ENCODE measurements at regions of chr4 and their contacts with region 1.

Region 1: DNA sequence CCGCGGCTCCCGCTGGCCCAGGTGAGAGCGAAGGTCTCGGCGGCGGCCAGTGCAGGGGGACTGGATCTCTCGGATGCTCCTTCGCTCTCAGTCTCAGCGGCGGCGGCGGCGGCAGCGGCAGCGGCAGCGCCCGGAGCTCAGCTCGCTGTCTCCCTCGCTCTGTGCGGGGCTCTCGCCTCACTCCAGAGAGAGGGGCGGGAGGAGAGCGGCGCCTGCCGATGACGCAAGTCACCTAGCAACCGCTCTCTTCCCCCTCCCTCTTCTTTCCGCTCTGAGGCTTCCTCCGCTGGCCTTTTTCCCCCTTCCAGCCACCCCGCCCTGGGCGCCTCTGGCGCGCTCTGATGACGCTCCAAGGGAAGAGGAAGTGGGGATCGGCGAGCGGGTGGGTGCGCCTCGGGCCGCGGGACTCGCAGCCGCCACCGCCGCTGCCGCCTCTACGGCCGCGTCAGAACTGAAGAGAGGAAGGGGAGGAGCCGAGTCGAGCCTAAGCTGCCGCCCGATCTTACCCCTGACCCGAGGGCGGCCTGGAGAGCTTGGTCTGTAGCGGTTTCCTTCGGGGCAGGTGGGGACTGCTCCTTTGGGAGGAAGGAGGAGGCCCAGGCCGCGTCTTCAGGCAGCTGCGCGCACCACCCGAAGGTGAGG is at the start of gene FBXW7:
- DNase-seq: peak; percentile 91 to 99
- H3K4me3 ChIP-seq: peak within 1 kb of the TSS; percentile 94
- H3K27ac ChIP-seq: peak within 1 kb of the TSS; percentile 86
- H3K4me1 ChIP-seq: peaks cover 23% of the 10 kb centered on the region
- H3K27me3 ChIP-seq: no peaks in the 10 kb centered on the region
- CTCF ChIP-seq: no peak
- total RNA-seq, gene FBXW7: 28.0 and 30.2 TPM in 2 replicates

Region 2: GRCh38 chr4:152572417-152573086 is 36.5 kb after region 1 on chr4:
- CTCF ChIA-PET with region 1: no interaction called
- POLR2A ChIA-PET with region 1: no interaction called
- intact Hi-C with region 1: loop called (anchors 1 kb)
- DNase-seq: peak; percentile 18 to 92
- H3K4me3 ChIP-seq: peak overlapping the region; percentile 50; the same call in 1 of the 2 replicates
- H3K27ac ChIP-seq: peak overlapping the region; percentile 94
- H3K4me1 ChIP-seq: peaks cover 28% of the 10 kb centered on the region
- H3K27me3 ChIP-seq: no peaks in the 10 kb centered on the region
- CTCF ChIP-seq: no peak

Region 3: DNA sequence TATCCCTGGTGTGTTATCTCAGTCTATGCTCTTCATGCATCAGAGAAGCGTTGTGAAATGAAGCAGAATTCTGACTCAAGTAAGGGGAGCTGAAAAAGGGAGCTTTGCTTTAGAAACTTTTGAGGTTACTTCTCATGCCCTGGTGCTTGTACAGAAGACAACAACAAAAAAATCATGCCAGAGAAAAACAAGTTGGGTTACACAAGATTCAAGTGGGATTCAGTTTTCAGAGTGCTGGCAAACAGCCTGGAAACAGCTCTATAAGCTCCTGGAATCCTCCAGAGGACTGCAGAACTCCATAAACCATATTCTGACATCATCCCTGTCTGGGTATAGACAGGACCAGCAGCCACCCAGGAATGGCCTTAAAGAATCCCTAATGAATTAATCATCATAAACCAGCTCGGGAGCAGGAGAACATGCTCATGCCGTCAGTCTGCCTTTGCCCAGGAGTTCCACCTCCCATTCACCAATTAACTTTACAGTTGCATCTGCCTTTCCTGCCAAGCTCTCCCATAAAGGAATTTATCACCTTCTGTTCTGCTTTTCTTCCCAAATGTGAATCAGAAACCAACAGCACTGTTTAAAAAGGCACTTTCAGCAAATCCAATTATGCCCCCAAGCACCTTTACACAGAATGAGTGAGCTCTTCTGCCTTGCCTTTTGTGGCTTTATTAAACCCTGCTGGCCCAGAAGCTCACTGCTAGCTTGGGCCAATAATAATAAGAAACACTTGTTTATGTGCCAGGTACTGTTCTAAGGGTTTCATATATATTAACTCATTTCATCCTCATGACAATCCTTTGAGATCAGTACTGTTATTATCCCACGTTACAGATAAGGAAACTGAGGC is 54.4 kb after region 1 on chr4:
- CTCF ChIA-PET with region 1: no interaction called
- POLR2A ChIA-PET with region 1: interaction called, 12 read pairs
- intact Hi-C with region 1: no loop called
- DNase-seq: peak; percentile 44 to 76
- H3K4me3 ChIP-seq: no peak overlapping the region
- H3K27ac ChIP-seq: no peak overlapping the region
- H3K4me1 ChIP-seq: peaks cover 16% of the 10 kb centered on the region; the same call in 1 of the 2 replicates
- H3K27me3 ChIP-seq: no peaks in the 10 kb centered on the region
- CTCF ChIP-seq: no peak

Region 4: GRCh38 chr4:152613841-152614721 is 78.1 kb after region 1 on chr4:
- CTCF ChIA-PET with region 1: no interaction called
- POLR2A ChIA-PET with region 1: no interaction called
- intact Hi-C with region 1: loop called (anchors 5 kb)
- DNase-seq: peak in 1 of 2 experiments; percentile 46
- H3K4me3 ChIP-seq: no peak overlapping the region
- H3K27ac ChIP-seq: no peak overlapping the region
- H3K4me1 ChIP-seq: no peaks in the 10 kb centered on the region; the same call in 1 of the 2 replicates
- H3K27me3 ChIP-seq: no peaks in the 10 kb centered on the region
- CTCF ChIP-seq: no peak

Region 5: DNA sequence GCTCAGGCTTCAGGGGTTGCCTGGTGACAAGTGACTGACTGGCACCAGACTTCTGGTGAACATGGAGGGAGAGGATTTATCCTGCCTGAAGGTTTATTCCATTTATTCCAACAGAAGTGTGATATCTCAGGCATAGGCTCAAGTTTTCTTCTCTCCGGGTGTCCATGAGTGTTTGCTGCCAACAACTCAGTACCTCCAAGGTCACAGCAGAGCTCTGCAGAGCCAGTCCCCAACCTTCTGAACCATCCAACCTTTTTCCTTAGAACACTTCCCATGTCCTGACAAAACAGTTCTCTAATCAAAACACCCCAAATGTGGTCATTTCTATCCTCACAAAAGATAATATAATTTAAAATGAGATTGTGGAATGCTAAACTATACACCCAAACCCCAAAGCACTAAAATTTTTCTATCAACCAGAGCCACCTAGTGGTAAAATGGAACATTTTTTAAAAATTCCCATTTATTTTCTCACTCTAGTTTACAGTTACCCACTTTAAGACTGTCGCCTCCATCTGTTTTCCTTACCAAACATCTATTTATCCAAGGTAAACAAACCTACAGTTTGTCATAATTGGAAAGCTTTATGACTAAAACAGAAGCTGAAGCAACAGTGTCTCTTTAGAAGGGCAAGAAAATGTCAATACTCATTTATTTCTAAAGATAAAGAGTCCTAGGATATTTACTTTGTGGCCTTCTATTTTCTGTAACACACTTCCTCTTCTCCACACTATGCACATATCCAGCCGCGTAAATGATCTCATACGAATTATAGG is 104.2 kb after region 1 on chr4:
- CTCF ChIA-PET with region 1: interaction called, 10 read pairs
- POLR2A ChIA-PET with region 1: no interaction called
- intact Hi-C with region 1: no loop called
- DNase-seq: peak in 1 of 2 experiments; percentile 37
- H3K4me3 ChIP-seq: no peak overlapping the region
- H3K27ac ChIP-seq: no peak overlapping the region
- H3K4me1 ChIP-seq: no peaks in the 10 kb centered on the region
- H3K27me3 ChIP-seq: no peaks in the 10 kb centered on the region
- CTCF ChIP-seq: peak; percentile 79

Region 6: GRCh38 chr4:152817331-152817730 is 281.3 kb after region 1 on chr4:
- CTCF ChIA-PET with region 1: no interaction called
- POLR2A ChIA-PET with region 1: no interaction called
- intact Hi-C with region 1: no loop called
- DNase-seq: no peak
- H3K4me3 ChIP-seq: no peak overlapping the region
- H3K27ac ChIP-seq: no peak overlapping the region
- H3K4me1 ChIP-seq: no peaks in the 10 kb centered on the region
- H3K27me3 ChIP-seq: no peaks in the 10 kb centered on the region
- CTCF ChIP-seq: no peak